ENCODE measurements at regions of chr2 and their contacts with region 1.

Region 1: GRCh38 chr2:20642055-20642971 is 8.6 kb downstream of the HS1BP3 start:
- DNase-seq: peak; percentile 80
- H3K4me3 Mint-ChIP-seq: no peak overlapping the region
- H3K27ac Mint-ChIP-seq: no peak overlapping the region
- H3K4me1 Mint-ChIP-seq: no peaks in the 10 kb centered on the region
- H3K27me3 Mint-ChIP-seq: no peaks in the 10 kb centered on the region

Region 2: DNA sequence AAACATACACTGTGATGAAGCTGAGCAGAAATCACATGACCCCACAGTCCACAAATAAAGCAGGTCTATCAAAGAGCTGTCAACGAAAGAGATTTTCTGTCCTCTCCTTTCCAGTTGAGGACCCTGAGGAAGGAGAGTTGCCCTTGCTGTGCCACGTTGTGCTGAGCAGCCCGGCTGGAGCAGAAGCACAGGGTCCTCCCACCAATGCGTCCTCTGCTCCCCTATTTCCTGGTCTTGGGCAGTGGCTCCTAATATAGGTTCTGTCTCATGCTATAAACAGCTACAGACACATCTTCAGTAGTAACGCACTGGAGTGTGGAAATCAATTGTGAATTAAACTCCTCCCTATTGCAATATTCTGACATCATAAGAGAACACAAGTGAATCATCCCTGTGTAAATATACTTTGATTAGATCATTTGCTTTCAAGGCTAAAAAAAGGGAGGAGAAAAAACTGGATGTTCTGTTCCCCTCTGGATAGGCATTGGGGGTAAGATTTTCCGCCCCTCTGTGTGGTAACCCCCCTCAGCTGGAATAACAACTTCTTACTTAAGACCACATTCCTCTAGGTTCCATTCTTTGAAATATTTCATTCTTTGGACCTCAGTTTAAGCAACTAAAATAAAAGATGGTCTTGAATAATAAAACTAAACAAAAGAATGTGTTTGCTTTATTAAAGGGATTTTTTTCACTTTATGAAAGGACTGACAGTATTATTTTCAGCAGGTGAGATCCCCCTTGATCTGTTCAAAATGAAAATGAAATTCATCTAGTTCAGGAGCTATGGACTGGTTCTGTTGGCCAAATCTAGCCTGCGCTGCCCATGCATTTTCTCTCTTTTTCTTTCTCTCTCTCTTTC is 203.8 kb before region 1 on chr2:
- CTCF ChIA-PET with region 1: interaction called, 65 read pairs
- DNase-seq: no peak
- H3K4me3 Mint-ChIP-seq: no peak overlapping the region
- H3K27ac Mint-ChIP-seq: no peak overlapping the region
- H3K4me1 Mint-ChIP-seq: no peaks in the 10 kb centered on the region
- H3K27me3 Mint-ChIP-seq: peaks cover 54% of the 10 kb centered on the region

Region 3: GRCh38 chr2:20446917-20447436 is 195.3 kb before region 1 on chr2 and contains the start of gene RHOB:
- CTCF ChIA-PET with region 1: interaction called, 65 read pairs
- DNase-seq: peak; percentile 92
- H3K4me3 Mint-ChIP-seq: peak within 1 kb of the TSS; percentile 73
- H3K27ac Mint-ChIP-seq: no peak within 1 kb of the TSS
- H3K4me1 Mint-ChIP-seq: peaks cover 6% of the 10 kb centered on the region
- H3K27me3 Mint-ChIP-seq: peaks cover 74% of the 10 kb centered on the region

Region 4: GRCh38 chr2:20609349-20609994 is 32.8 kb before region 1 on chr2:
- CTCF ChIA-PET with region 1: no interaction called
- DNase-seq: peak; percentile 17
- H3K4me3 Mint-ChIP-seq: no peak overlapping the region
- H3K27ac Mint-ChIP-seq: no peak overlapping the region
- H3K4me1 Mint-ChIP-seq: no peaks in the 10 kb centered on the region
- H3K27me3 Mint-ChIP-seq: peaks cover 4% of the 10 kb centered on the region

Region 5: DNA sequence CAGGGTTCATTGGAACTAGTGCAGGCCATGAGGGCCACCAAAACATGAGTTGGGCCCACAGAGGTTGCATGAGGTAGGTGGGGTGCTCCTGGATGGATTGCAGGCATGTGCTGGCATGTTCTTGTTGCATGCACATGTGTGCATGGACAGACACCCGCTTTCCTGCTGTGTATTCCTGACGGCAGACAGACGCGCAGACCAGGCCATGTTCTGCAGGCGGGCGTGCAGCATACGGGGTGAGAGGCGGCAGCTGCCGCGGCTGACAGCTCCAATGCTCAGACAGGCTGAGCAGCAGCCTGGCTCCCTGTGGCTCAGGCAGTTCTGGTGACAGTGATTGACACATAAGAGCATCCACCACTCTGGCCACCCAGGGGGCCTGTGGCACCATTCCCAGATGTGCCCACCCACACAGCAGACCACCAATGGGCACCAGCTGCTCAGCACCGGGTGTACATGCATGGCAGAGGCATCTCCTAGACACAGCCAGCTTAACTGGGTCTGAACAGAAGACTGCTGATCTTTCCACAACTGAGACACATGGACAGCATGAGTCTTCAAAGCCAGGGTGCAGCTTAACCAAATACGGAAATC is 12.6 kb before region 1 on chr2:
- CTCF ChIA-PET with region 1: interaction called, 12 read pairs
- DNase-seq: no peak
- H3K4me3 Mint-ChIP-seq: no peak overlapping the region
- H3K27ac Mint-ChIP-seq: no peak overlapping the region
- H3K4me1 Mint-ChIP-seq: peaks cover 4% of the 10 kb centered on the region
- H3K27me3 Mint-ChIP-seq: no peaks in the 10 kb centered on the region

Measured in activated naive CD4-positive, alpha-beta T cell treated with anti-CD3 and anti-CD28 coated beads, Interleukin-2, amount 10 ng/mL, durations not matched to agents 7 days and 5 days (primary cell).